Ascending aorta (tissue), 2 donors: ENCODE measurements at regions of chr6 and their contacts with region 1.

Region 1: DNA sequence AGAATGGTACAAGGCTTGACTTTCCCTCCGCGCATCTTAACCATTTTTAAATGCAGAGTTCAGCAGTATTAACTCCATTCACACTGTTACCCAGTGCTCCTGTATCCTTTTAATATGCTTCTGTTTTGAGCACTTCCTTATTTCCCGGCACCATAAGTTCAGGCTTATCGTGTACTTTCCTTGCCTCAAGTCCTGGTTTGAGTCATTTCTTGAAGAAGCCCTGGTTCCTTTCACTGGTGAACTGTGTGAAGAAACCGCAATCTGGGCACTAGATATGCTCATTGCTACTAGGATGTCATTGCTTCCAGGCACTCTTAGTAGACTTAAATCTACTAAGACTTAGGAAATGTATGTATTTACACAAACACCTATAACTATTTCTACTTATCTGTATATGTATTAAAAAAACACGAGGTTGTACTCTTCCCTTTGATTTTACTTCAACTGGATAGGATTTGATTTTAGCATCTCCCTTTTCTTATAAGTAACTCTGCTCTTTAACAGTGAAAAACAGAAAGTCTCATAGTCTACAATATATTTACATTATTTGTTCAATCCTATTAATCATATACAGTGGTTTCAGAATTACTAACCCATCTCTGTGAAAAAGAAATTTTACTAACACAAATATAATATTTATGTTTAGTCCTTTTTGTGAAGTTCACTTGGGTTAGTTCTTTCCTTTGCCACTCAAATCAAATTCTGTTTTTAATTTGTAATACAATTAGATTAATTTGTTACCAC is 135.5 kb downstream of the CDKAL1 start:
- DNase-seq: no peak
- H3K4me3 ChIP-seq: no peak overlapping the region
- H3K27ac ChIP-seq: no peak overlapping the region
- H3K4me1 ChIP-seq: no peaks in the 10 kb centered on the region
- H3K27me3 ChIP-seq: no peaks in the 10 kb centered on the region
- CTCF ChIP-seq: no peak

Region 2: DNA sequence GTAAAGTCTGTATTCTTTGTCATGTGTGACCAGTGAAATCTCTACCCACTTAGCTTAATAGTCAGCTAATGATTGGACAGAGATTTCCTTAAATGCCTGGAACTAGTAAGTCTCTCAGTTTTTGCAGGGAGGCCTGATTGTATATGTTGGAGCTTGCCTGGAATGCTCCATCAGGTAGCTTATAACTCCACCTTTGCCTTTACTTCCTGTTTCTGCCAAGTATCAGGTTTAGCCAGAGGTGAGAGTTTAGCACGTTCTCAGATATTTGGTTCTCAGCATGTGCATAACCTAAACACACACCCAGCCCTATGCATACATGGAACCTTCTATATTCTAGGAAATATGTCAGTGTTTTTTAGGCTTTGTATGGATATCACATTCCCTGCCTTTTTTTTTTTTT is 299.8 kb after region 1 on chr6:
- intact Hi-C with region 1: loop called (anchors 5 kb)
- DNase-seq: no peak
- H3K4me3 ChIP-seq: no peak overlapping the region
- H3K27ac ChIP-seq: no peak overlapping the region
- H3K4me1 ChIP-seq: no peaks in the 10 kb centered on the region
- H3K27me3 ChIP-seq: no peaks in the 10 kb centered on the region
- CTCF ChIP-seq: no peak